Heart left ventricle (tissue), 16 donors: ENCODE measurements at regions of chr16 and their contacts with region 1.

Region 1: GRCh38 chr16:53726625-53727024 is 22.7 kb downstream of the FTO start:
- DNase-seq: no peak
- ATAC-seq: peak in 1 of 4 donors; percentile 53
- H3K4me3 ChIP-seq: no peak overlapping the region
- H3K27ac ChIP-seq: no peak overlapping the region
- H3K4me1 ChIP-seq: peaks cover 0 to 33% (median 15%) of the 10 kb centered on the region in 12 donors
- H3K27me3 ChIP-seq: no peaks in the 10 kb centered on the region
- CTCF ChIP-seq: no peak
- POLR2A ChIP-seq: no peak

Region 2: GRCh38 chr16:53334581-53334980 is 392.0 kb before region 1 on chr16:
- intact Hi-C with region 1: loop called in 1 of 10 experiments (anchors 10 kb)
- DNase-seq: no peak
- ATAC-seq: no peak
- H3K4me3 ChIP-seq: no peak overlapping the region
- H3K27ac ChIP-seq: no peak overlapping the region
- H3K4me1 ChIP-seq: no peaks in the 10 kb centered on the region
- H3K27me3 ChIP-seq: no peaks in the 10 kb centered on the region
- CTCF ChIP-seq: no peak
- POLR2A ChIP-seq: no peak